ENCODE measurements at regions of chr3 and their contacts with region 1.

Region 1: DNA sequence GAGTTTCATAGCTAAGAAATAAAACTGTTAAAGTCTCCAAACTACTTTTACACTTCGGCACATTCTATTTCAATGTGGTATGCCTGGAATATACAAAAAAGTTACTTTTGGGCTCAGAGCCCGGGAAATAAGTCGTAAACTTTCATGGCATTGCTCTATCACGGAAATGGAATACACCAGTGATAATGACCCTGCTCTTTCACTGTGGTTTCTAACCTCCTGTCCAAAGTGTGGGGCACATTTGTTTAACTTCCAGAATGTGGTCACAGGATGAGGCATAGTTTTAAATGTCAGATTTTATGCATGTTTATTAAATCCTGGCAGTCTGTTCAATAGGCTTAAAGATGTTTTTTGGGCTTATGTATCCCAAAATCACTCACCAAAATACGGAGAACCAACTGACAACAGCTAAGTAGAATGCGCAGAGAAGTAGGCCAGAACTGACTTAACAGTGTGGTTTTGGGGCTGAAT is 5.1 kb downstream of the CXCR6 start:
- DNase-seq: no peak
- ATAC-seq: no peak
- H3K4me3 Mint-ChIP-seq: peak overlapping the region; percentile 48
- H3K27ac Mint-ChIP-seq: peak overlapping the region; percentile 84
- H3K4me1 Mint-ChIP-seq: peaks cover 95% of the 10 kb centered on the region
- H3K27me3 Mint-ChIP-seq: no peaks in the 10 kb centered on the region

Region 2: DNA sequence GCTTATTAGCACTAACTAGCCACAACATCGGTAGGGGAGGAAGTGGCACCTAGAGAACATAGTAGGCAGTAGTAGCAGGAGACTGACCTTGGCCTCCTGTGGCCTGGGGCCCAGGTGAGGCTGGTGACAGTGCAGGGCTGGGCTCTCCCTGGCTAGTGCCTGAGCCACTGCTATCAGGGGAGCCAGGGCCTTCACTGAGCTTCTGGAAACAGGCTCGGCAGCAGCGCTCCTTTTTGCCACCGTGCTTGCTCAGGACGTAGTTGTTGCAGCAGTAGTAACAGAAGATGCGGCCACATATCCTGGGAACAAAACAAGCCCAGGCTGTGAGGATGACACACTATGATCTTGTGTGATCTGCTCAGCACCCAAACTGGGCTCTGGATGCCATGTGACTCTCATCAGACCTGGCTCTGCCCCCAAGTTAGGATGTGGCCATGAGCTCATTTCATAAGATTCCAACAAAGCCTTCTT is 10.0 kb after region 1 on chr3:
- CTCF ChIA-PET with region 1: interaction called, 14 read pairs
- DNase-seq: no peak
- ATAC-seq: no peak
- H3K4me3 Mint-ChIP-seq: no peak overlapping the region
- H3K27ac Mint-ChIP-seq: peak overlapping the region; percentile 35
- H3K4me1 Mint-ChIP-seq: peaks cover 59% of the 10 kb centered on the region
- H3K27me3 Mint-ChIP-seq: no peaks in the 10 kb centered on the region

Region 3: DNA sequence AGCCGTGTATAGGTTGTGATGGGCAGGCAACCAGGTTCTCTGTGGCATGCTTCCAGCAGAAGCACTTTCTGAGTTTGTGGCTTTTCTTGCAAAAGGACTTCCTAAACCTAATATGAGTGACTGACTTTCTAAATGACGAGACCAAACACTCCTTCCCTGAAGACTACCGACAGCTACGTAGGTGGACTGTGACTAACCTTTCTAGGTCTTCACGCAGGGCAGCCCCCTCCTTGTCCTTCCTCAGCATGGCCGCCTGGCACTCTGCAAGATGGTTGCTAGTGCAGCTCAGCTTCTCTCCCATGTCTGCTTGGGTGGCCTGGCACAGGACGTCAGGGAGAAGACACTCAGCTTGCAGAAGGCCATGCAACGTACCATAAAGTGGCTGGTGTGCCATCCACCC is 15.8 kb after region 1 on chr3:
- CTCF ChIA-PET with region 1: interaction called, 16 read pairs
- DNase-seq: peak; percentile 83
- ATAC-seq: peak; percentile 87
- H3K4me3 Mint-ChIP-seq: no peak overlapping the region
- H3K27ac Mint-ChIP-seq: peak overlapping the region; percentile 85
- H3K4me1 Mint-ChIP-seq: peaks cover 83% of the 10 kb centered on the region
- H3K27me3 Mint-ChIP-seq: no peaks in the 10 kb centered on the region